Psoas muscle (tissue), 8 donors: ENCODE measurements at regions of chr11 and their contacts with region 1.

Region 1: GRCh38 chr11:44950625-44951476 is at the start of gene TP53I11:
- DNase-seq: peak; percentile 88 to 90
- ATAC-seq: peak; percentile 74 to 84 (median 82)
- H3K4me3 ChIP-seq: peak within 1 kb of the TSS; percentile 79
- H3K27ac ChIP-seq: peak within 1 kb of the TSS; percentile 67
- H3K4me1 ChIP-seq: peaks cover 6% of the 10 kb centered on the region
- H3K27me3 ChIP-seq: peaks cover 0 to 11% (median 0%) of the 10 kb centered on the region in 3 donors
- CTCF ChIP-seq: peak; percentile 67
- total RNA-seq, gene TP53I11: 8.3 to 16.5 (median 15.0) TPM

Region 2: DNA sequence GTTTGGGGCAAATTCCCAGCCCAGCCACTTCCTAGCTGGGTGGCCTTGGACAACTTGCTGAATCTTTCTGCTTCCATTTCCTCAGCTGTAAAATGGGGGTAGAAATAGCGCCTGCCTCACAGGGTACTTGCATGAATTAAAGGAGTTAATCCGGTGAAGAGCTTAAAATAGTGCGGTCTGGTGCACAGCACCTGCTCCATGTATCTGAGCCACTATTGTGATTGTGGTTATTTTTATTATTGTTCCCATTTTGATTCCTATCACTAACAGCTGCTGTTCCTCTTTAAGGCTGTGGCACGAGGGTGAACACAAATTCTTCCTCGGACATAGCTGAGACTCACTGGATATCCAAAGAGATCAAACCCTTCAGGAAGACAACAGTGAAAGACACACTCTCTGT is 46.7 kb after region 1 on chr11:
- intact Hi-C with region 1: no loop called
- DNase-seq: no peak
- ATAC-seq: peak in 2 of 4 donors; percentile 40 to 45
- H3K4me3 ChIP-seq: no peak overlapping the region
- H3K27ac ChIP-seq: no peak overlapping the region
- H3K4me1 ChIP-seq: peaks cover 7% of the 10 kb centered on the region
- H3K27me3 ChIP-seq: no peaks in the 10 kb centered on the region
- CTCF ChIP-seq: no peak

Region 3: DNA sequence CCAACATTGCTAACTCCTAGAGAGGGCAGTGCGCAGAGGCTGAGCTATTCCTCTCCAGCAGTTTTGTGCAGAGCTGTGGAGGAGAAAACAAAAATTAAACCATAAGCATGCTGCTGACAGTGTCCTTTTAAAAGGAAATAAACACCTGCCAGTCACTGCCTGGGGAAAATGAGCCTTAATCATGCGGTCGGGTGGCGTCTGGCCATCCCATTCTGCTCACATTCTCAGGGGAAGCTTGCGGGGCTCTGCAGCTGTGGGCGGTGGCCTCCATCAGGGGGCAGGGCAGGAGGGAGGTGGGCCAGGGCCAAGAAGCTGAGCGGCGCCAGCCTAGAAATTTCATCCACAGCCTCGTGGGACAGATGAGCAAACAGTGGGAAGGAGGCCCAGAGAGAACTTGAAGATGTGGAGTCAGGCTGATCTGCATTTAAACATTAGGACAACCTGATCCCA is 70.9 kb after region 1 on chr11:
- intact Hi-C with region 1: loop called in 1 of 2 experiments (anchors 5 kb)
- DNase-seq: peak; percentile 88 to 93
- ATAC-seq: peak; percentile 88 to 95 (median 92)
- H3K4me3 ChIP-seq: peak overlapping the region; percentile 15
- H3K27ac ChIP-seq: peak overlapping the region; percentile 76
- H3K4me1 ChIP-seq: peaks cover 28% of the 10 kb centered on the region
- H3K27me3 ChIP-seq: no peaks in the 10 kb centered on the region
- CTCF ChIP-seq: peak; percentile 3

Region 4: DNA sequence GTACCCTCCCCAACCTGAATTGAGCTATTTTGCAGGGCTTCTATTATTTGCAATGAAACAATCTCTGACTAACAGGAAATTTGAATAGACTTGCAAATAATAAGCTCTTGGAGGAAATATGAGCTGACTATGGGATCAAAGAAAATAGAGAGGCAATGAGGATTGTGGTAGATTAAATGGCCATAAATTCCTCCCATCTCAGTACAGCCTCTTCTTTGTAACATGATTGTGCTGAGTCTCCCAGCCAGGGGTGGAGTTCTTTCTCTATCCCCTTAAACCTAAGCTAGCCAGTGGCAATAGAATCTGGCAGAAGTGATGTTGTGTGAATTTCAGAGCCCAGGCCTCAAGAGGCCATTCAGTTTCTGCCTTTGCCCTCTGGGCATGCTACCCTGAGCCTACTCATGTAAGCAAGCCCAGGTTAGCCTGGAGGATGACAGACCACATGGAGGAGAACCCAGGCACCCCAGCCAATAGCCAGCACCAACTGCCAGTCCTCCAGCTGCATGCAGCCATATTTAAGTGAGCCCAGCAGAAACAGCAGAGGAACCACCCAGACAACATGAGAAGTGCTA is 86.7 kb after region 1 on chr11:
- intact Hi-C with region 1: loop called in 1 of 2 experiments (anchors 5 kb)
- DNase-seq: no peak
- ATAC-seq: no peak
- H3K4me3 ChIP-seq: no peak overlapping the region
- H3K27ac ChIP-seq: no peak overlapping the region
- H3K4me1 ChIP-seq: no peaks in the 10 kb centered on the region
- H3K27me3 ChIP-seq: no peaks in the 10 kb centered on the region
- CTCF ChIP-seq: no peak